ENCODE measurements at regions of chr10 and their contacts with region 1.

Region 1: GRCh38 chr10:101060036-101060950 is 1.5 kb upstream of the KAZALD1 start:
- DNase-seq: peak; percentile 79
- ATAC-seq: peak; percentile 65
- H3K4me3 Mint-ChIP-seq: peak overlapping the region; percentile 98
- H3K27ac Mint-ChIP-seq: peak overlapping the region; percentile 95
- H3K4me1 Mint-ChIP-seq: peaks cover 34% of the 10 kb centered on the region
- H3K27me3 Mint-ChIP-seq: peaks cover 6% of the 10 kb centered on the region
- CTCF ChIP-seq: peak; percentile 62

Region 2: GRCh38 chr10:101031128-101031795 is 29.0 kb before region 1 on chr10 and contains the starts of genes PDZD7 and SFXN3:
- CTCF ChIA-PET with region 1: interaction called, 5 read pairs
- POLR2A ChIA-PET with region 1: interaction called, 11 read pairs
- intact Hi-C with region 1: loop called (anchors 1 kb)
- DNase-seq: peak; percentile 93
- ATAC-seq: peak; percentile 91
- H3K4me3 Mint-ChIP-seq: peak within 1 kb of the TSS; percentile 92
- H3K27ac Mint-ChIP-seq: peak within 1 kb of the TSS; percentile 69
- H3K4me1 Mint-ChIP-seq: peaks cover 20% of the 10 kb centered on the region
- H3K27me3 Mint-ChIP-seq: peaks cover 19% of the 10 kb centered on the region
- CTCF ChIP-seq: no peak
- total RNA-seq, gene PDZD7: 0.11 TPM in 1 of 2 replicates, not detected in the other
- total RNA-seq, gene SFXN3: 9.5 and 9.8 TPM in 2 replicates

Region 3: GRCh38 chr10:101222683-101223273 is 162.5 kb after region 1 on chr10:
- CTCF ChIA-PET with region 1: no interaction called
- POLR2A ChIA-PET with region 1: no interaction called
- intact Hi-C with region 1: loop called (anchors 5 kb)
- DNase-seq: no peak
- ATAC-seq: peak; percentile 25
- H3K4me3 Mint-ChIP-seq: peak overlapping the region; percentile 70
- H3K27ac Mint-ChIP-seq: no peak overlapping the region
- H3K4me1 Mint-ChIP-seq: peaks cover 43% of the 10 kb centered on the region
- H3K27me3 Mint-ChIP-seq: peaks cover 73% of the 10 kb centered on the region
- CTCF ChIP-seq: no peak

Region 4: GRCh38 chr10:101453791-101454718 is 393.8 kb after region 1 on chr10:
- CTCF ChIA-PET with region 1: no interaction called
- POLR2A ChIA-PET with region 1: interaction called, 10 read pairs
- intact Hi-C with region 1: no loop called
- DNase-seq: no peak
- ATAC-seq: no peak
- H3K4me3 Mint-ChIP-seq: no peak overlapping the region
- H3K27ac Mint-ChIP-seq: no peak overlapping the region
- H3K4me1 Mint-ChIP-seq: peaks cover 20% of the 10 kb centered on the region
- H3K27me3 Mint-ChIP-seq: no peaks in the 10 kb centered on the region
- CTCF ChIP-seq: no peak

Region 5: GRCh38 chr10:102085336-102085735 is 1025.0 kb after region 1 on chr10:
- CTCF ChIA-PET with region 1: no interaction called
- POLR2A ChIA-PET with region 1: no interaction called
- intact Hi-C with region 1: no loop called
- DNase-seq: no peak
- ATAC-seq: no peak
- H3K4me3 Mint-ChIP-seq: no peak overlapping the region
- H3K27ac Mint-ChIP-seq: no peak overlapping the region
- H3K4me1 Mint-ChIP-seq: no peaks in the 10 kb centered on the region
- H3K27me3 Mint-ChIP-seq: no peaks in the 10 kb centered on the region
- CTCF ChIP-seq: no peak

Measured in activated B cell treated with CpG ODN at 0.5 μM for 24 hours (primary cell).